ENCODE measurements at regions of chr15 and their contacts with region 1.

Region 1: DNA sequence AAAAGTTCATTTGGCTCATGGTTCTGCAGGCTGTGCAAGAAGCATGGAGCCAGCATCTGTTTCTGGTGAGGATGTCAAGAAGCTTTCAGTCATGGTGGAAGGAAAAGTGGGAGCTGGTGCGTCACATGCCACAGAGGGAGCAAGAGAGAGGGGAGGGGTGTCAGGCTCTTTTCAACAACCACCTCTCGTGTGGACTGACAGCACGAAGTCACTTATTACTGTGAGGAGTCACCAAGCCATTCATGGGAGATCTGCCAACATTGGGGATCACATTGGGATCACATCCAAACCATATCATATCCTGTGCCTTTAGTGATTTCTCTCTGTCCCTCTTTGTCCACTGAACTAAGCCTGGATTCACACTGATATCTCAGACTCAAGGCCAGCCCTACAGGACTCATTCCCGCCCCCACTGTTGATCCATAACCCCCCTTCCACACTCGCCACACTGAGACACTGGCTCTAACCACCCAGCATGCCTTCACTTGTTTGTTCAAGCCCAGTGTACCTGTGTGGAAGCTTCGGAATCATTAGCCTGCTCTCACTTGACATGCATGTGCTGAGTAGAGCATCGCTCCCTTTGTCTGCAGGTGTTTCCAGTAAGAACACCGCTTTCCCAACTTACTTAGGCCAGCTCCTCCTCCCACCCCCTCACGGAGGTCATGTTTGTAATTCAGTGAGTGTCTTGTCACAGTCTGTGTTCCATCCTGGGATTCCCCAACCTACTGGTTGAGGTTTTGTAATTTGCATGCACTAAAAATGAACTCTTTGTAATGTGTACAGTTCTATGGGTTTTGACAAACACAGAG is 132.2 kb downstream of the KLF13 start:
- DNase-seq: peak; percentile 77
- ATAC-seq: peak; percentile 96
- H3K4me3 ChIP-seq: peak overlapping the region; percentile 4; the same call in 1 of the 2 replicates
- H3K27ac ChIP-seq: peak overlapping the region; percentile 24; the same call in 1 of the 2 replicates
- H3K4me1 ChIP-seq: peaks cover 22% of the 10 kb centered on the region
- H3K27me3 ChIP-seq: no peaks in the 10 kb centered on the region
- CTCF ChIP-seq: no peak
- EP300 ChIP-seq: peak; percentile 47 to 55; a peak in 2 of 4 replicates
- POLR2A ChIP-seq: no peak
- RAD21 ChIP-seq: no peak

Region 2: DNA sequence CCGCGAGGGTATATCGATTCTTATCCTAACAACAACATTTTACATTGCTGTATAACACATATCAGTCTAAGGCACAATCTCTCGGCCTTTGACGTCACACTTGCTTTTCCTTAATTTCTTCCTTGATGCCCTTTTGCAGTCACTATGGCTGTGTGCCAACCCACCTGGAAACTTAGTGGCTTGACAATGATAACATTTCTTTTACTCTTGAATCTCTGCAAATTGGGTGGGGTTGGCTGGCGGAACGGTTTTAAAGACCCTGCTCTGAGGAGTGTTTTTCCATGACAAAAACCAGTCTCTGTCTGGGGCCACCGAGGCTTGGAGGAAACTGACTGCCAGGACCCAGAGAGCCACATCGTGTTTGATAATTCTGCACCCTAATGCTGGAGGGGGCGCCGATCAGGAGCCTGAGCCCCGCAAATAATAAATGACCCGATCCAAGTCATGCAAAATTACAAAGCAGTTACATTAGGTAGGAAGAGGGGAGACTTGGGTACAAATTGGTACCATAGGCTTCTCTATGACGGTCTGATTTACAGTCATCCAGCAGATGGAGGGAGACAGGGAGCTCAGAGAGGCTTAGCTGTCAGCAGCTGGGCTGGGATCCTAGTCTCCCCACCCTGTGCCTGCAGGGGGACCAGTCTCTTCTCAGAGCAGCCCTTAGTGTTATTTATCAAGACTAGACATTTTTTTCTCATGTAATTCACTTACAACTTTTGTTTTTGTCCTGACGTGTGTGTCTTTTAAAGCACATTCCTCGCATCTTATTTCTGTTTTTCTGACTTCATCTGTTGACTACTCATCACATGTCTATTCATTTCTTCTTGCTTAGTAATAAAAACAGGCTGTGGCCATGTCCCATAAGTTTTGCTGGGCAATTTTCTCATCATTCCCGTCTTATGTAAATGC is 16.3 kb before region 1 on chr15:
- CTCF ChIA-PET with region 1: interaction called, 23 read pairs
- POLR2A ChIA-PET with region 1: interaction called, 32 read pairs
- RAD21 ChIA-PET with region 1: interaction called, 72 read pairs
- SMC1A ChIA-PET with region 1: interaction called, 25 read pairs
- in situ Hi-C with region 1: no loop called
- intact Hi-C with region 1: no loop called
- DNase-seq: no peak
- ATAC-seq: 0 out of 3 replicates have a peak, but pooled peaks have one; percentile 26
- H3K4me3 ChIP-seq: no peak overlapping the region
- H3K27ac ChIP-seq: no peak overlapping the region
- H3K4me1 ChIP-seq: peaks cover 34% of the 10 kb centered on the region
- H3K27me3 ChIP-seq: no peaks in the 10 kb centered on the region
- CTCF ChIP-seq: peak in 2 of 3 experiments; percentile 5 to 26; a peak in 2 of 6 replicates
- EP300 ChIP-seq: no peak
- POLR2A ChIP-seq: no peak
- RAD21 ChIP-seq: no peak

Region 3: DNA sequence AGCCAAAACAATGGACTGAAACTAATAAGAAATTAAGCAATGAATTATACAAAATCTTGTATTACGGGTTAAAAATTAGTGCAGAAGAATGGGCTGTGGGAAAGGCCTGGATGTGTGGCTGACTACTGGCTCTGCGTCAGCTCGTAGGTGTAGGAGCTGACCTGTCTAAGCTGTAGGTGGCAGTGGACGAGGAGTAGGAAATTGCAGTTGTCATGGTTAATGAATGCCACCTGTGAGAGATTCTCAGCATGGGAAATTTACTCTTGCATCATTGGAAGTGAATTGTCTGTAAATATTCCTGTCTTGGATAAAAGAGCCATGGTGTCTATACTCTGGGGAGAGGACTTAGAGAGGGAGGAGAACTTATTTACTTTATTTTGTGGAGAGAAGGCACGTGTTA is 594.9 kb after region 1 on chr15:
- CTCF ChIA-PET with region 1: no interaction called
- POLR2A ChIA-PET with region 1: no interaction called
- RAD21 ChIA-PET with region 1: no interaction called
- SMC1A ChIA-PET with region 1: no interaction called
- in situ Hi-C with region 1: no loop called
- intact Hi-C with region 1: no loop called
- DNase-seq: no peak
- ATAC-seq: no peak
- H3K4me3 ChIP-seq: no peak overlapping the region
- H3K27ac ChIP-seq: no peak overlapping the region
- H3K4me1 ChIP-seq: no peaks in the 10 kb centered on the region
- H3K27me3 ChIP-seq: no peaks in the 10 kb centered on the region
- CTCF ChIP-seq: no peak
- EP300 ChIP-seq: no peak
- POLR2A ChIP-seq: no peak
- RAD21 ChIP-seq: no peak